Tibial artery (tissue), 4 donors: ENCODE measurements at regions of chr6 and their contacts with region 1.

Region 1: GRCh38 chr6:25788305-25788922 is 33.9 kb downstream of the SLC17A4 start:
- DNase-seq: peak; percentile 24 to 68
- H3K4me3 ChIP-seq: no peak overlapping the region
- H3K27ac ChIP-seq: no peak overlapping the region
- H3K4me1 ChIP-seq: no peaks in the 10 kb centered on the region
- H3K27me3 ChIP-seq: no peaks in the 10 kb centered on the region
- CTCF ChIP-seq: peak; percentile 34 to 35

Region 2: GRCh38 chr6:25851961-25852360 is 63.5 kb after region 1 on chr6:
- intact Hi-C with region 1: no loop called
- DNase-seq: no peak
- H3K4me3 ChIP-seq: no peak overlapping the region
- H3K27ac ChIP-seq: no peak overlapping the region
- H3K4me1 ChIP-seq: no peaks in the 10 kb centered on the region
- H3K27me3 ChIP-seq: no peaks in the 10 kb centered on the region
- CTCF ChIP-seq: no peak

Region 3: GRCh38 chr6:25992413-25993037 is 204.1 kb after region 1 on chr6:
- intact Hi-C with region 1: loop called (anchors 10 kb)
- DNase-seq: peak; percentile 93 to 98
- H3K4me3 ChIP-seq: peak overlapping the region; percentile 73 to 74
- H3K27ac ChIP-seq: peak overlapping the region; percentile 91 to 96
- H3K4me1 ChIP-seq: peaks cover 0 to 15% (median 8%) of the 10 kb centered on the region in 4 donors
- H3K27me3 ChIP-seq: no peaks in the 10 kb centered on the region
- CTCF ChIP-seq: peak; percentile 99

Region 4: DNA sequence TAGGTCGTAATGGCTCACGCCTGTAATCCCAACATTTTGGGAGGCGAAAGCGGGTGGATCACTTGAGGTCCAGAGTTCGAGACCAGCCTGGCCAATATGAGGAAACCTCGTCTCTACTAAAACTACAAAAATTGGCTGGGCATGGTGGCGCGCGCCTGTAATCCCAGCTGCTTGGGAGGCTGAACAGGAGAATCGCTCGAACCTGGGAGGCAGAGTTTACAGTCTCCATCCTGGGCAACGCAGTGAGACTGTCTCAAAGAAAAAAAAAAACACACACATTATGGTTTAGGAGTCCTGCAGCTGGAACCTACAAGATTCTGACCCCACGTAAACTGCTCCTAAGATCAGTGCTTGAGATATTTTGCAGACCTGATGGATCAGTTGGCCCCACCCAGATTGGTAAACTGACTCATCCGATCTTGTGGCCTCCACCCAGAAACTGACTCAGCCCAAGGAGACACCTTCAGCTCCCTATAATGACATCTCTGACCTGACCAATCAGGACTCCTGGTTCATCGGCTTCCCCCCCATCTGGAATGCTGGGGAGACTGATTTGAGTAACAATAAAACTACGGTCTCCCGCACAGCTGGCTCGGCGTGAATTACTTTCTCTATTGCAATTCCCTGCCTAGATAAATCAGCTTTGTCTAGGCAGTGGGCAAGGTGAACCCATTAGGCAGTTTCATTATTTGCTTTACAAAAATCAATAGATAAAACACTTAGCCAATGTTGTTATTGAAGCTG is 480.4 kb after region 1 on chr6:
- intact Hi-C with region 1: no loop called
- DNase-seq: no peak
- H3K4me3 ChIP-seq: no peak overlapping the region
- H3K27ac ChIP-seq: no peak overlapping the region
- H3K4me1 ChIP-seq: peaks cover 0 to 16% (median 10%) of the 10 kb centered on the region in 4 donors
- H3K27me3 ChIP-seq: peaks cover 0 to 8% of the 10 kb centered on the region in 2 donors
- CTCF ChIP-seq: no peak